ENCODE measurements at regions of chr16 and their contacts with region 1.

Region 1: GRCh38 chr16:68704232-68704867 is 32.7 kb upstream of the CDH1 start:
- DNase-seq: peak; percentile 28 to 89 (median 85)
- H3K4me3 ChIP-seq: no peak overlapping the region
- H3K27ac ChIP-seq: peak overlapping the region in 12 of 59 donors; percentile 1 to 69 (median 46)
- H3K27me3 ChIP-seq: no peaks in the 10 kb centered on the region
- CTCF ChIP-seq: peak; percentile 27 to 90 (median 78)

Region 2: DNA sequence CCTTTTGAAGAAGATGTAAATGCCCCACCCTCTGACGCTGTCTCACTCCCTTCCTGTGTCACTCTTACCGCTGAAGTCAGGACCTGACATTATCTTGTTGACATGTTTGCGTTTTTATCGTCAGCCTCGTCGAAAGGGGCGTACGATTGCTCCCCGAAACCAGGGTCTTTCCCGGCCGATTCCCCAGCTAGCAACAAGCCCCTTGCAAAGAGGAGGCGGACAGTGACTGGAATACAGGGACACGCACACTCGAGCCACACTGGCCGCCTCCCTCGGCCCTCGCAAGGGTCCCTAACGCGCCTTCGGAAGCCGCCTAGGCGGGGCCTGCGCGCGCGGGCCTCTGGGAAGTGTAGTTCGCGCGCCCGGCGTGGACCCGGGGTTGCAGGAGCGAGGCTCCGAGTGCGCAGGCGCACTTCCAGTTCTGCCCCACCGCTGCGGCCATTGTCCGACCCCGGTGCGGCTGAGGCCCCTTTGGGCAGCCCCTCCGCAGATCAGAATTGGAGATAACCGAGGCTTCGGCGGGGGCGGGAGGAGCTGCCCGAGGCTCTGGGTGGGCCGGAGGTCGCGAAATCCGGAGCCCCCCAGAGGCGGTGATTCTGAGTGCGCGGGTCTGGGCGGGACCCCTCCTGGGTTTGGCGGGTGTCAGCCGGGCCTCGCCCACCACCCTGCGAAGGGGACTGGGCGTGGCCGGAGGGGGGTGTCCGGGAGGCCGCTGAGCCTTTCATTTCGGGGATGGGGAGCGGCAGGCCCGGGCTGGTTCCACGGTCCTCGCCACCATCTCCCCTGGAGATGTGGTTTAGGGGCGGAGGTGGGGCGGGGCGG is 165.3 kb before region 1 on chr16 and contains the start of gene ZFP90:
- intact Hi-C with region 1: loop called (anchors 10 kb)
- DNase-seq: peak; percentile 74 to 94 (median 84)
- H3K4me3 ChIP-seq: peak within 1 kb of the TSS; percentile 61 to 100 (median 98)
- H3K27ac ChIP-seq: peak within 1 kb of the TSS in 58 of 59 donors; percentile 19 to 97 (median 85)
- H3K27me3 ChIP-seq: no peaks in the 10 kb centered on the region
- CTCF ChIP-seq: peak in 42 of 56 donors; percentile 2 to 60 (median 32)
- total RNA-seq, gene ZFP90: 43.3 to 78.1 (median 60.5) TPM

Region 3: GRCh38 chr16:68744369-68745280 is 40.3 kb after region 1 on chr16:
- intact Hi-C with region 1: loop called in 1 of 2 experiments (anchors 5 kb)
- DNase-seq: no peak
- H3K4me3 ChIP-seq: no peak overlapping the region
- H3K27ac ChIP-seq: peak overlapping the region in 34 of 59 donors; percentile 13 to 73 (median 44)
- H3K27me3 ChIP-seq: no peaks in the 10 kb centered on the region
- CTCF ChIP-seq: no peak

Region 4: DNA sequence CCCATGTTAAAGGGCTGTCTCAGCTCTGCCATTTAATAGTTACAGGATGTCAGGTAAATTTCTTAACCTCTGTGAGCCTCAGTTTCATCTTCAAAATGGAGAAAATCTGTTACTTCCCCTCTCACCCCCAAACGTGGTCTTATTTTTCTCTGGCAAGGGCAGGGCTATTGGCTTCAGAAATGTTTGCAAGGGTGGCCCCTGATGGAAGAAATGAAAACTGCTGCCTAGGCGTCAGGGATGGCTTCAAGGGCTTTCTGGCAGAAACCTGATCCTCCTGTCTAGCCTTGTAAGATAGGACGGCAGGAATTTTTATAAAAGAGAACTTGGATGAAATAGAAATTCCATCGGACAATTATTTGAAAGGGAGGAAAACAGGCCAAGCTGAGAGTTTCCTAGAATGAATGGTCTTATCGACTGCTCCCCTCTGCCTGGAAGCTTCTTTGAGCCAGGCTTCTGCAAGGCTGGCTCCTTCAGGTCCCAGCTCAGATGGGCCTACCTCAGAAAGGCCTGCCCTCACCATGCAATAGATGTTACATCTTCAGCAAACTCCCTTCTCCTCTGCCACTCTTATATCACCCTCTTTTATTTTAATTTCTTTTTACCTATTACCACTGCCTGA is 96.0 kb after region 1 on chr16:
- intact Hi-C with region 1: loop called (anchors 1 kb)
- DNase-seq: peak in 8 of 10 donors; percentile 13 to 73 (median 50)
- H3K4me3 ChIP-seq: no peak overlapping the region
- H3K27ac ChIP-seq: peak overlapping the region in 34 of 59 donors; percentile 13 to 81 (median 51)
- H3K27me3 ChIP-seq: no peaks in the 10 kb centered on the region
- CTCF ChIP-seq: peak; percentile 25 to 92 (median 72)

Region 5: DNA sequence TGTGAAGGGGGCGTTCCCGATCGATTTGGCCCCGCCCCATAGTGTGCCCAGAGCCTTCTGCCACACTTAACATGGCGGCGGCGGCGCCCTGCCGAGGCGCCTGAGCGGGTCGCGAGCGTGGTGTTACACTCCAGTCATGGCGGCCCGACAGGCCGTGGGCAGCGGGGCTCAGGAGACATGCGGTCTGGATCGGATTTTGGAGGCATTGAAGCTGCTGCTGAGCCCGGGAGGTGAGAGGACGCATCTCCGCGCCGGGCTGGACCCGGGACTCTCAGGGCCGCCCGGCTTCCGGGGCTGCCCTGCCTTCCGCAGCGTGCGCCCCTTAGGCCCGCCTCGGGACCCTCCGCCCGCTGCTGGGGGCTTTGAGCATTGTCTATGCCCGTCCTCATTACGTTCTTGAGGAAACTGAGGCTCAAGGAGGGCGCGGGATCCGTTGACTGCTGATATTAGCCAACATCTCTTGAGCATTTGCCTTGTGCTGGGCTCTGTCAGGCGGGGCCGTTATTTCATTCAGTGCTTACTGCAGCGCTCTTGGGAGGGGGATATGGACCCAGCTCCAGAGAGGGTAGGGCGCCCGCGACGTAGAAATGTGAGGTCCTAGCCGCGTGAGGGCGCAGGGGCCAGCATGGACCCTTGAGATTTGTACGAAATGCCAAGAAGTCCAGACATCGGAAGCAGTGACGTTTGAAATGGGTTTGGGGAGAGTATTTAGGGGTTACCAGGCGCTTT is 139.3 kb after region 1 on chr16 and contains the start of gene TANGO6:
- intact Hi-C with region 1: loop called in 1 of 2 experiments (anchors 5 kb)
- DNase-seq: peak; percentile 73 to 91 (median 86)
- H3K4me3 ChIP-seq: peak within 1 kb of the TSS; percentile 62 to 98 (median 90)
- H3K27ac ChIP-seq: peak within 1 kb of the TSS; percentile 45 to 97 (median 89)
- H3K27me3 ChIP-seq: no peaks in the 10 kb centered on the region
- CTCF ChIP-seq: peak in 35 of 56 donors; percentile 4 to 57 (median 23)
- total RNA-seq, gene TANGO6: 22.2 to 62.8 (median 36.2) TPM